ENCODE measurements at regions of chr6 and their contacts with region 1.

Region 1: GRCh38 chr6:110873981-110874879 is at the start of gene AMD1:
- DNase-seq: peak; percentile 97 to 99 (median 98)
- ATAC-seq: peak; percentile 84
- H3K4me3 ChIP-seq: peak within 1 kb of the TSS; percentile 79 to 94
- H3K27ac ChIP-seq: peak within 1 kb of the TSS; percentile 94
- H3K4me1 ChIP-seq: peaks cover 7 to 37% of the 10 kb centered on the region in 2 donors
- H3K27me3 ChIP-seq: no peaks in the 10 kb centered on the region
- CTCF ChIP-seq: peak in 1 of 2 donors; percentile 31
- polyA plus RNA-seq, gene AMD1: 57.0 to 63.6 (median 58.7) TPM

Region 2: DNA sequence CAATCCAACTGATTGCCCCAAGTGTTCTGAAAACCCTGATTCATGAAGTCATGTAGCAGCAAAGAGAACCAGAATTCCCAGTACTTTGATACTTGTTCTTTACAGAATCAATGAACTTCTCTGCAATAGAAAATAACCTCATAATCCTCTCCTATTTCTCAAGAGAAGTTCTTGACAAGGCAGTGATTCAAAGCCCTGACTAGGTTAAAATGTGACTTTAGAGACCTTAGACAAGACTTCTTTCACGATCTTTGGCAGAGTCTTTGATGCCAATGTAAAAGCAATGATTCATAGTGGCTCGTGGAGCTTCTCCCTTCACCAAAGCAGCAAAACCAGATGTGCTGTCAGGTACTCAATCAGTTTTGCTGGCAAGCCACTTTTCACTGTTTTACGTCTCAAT is 154.2 kb before region 1 on chr6:
- intact Hi-C with region 1: no loop called
- DNase-seq: no peak
- ATAC-seq: no peak
- H3K4me3 ChIP-seq: no peak overlapping the region
- H3K27ac ChIP-seq: no peak overlapping the region
- H3K4me1 ChIP-seq: no peaks in the 10 kb centered on the region
- H3K27me3 ChIP-seq: no peaks in the 10 kb centered on the region
- CTCF ChIP-seq: no peak

Region 3: GRCh38 chr6:110815217-110816109 is 58.8 kb before region 1 on chr6 and contains the start of gene CDK19:
- intact Hi-C with region 1: loop called in 1 of 2 experiments (anchors 10 kb)
- DNase-seq: peak; percentile 97 to 100 (median 99)
- ATAC-seq: peak; percentile 95
- H3K4me3 ChIP-seq: peak within 1 kb of the TSS; percentile 56 to 96
- H3K27ac ChIP-seq: peak within 1 kb of the TSS; percentile 97 to 98
- H3K4me1 ChIP-seq: peaks cover 8 to 49% of the 10 kb centered on the region in 2 donors
- H3K27me3 ChIP-seq: no peaks in the 10 kb centered on the region
- CTCF ChIP-seq: no peak
- polyA plus RNA-seq, gene CDK19: 33.5 to 46.1 (median 41.1) TPM

Measured in left lung (tissue), 14 donors.